ENCODE measurements at regions of chr5 and their contacts with region 1.

Region 1: GRCh38 chr5:140840978-140841959 is at the start of gene PCDHA8:
- DNase-seq: peak; percentile 83
- H3K4me3 ChIP-seq: peak within 1 kb of the TSS; percentile 66 to 96
- H3K27ac ChIP-seq: peak within 1 kb of the TSS in 1 of 2 experiments; percentile 50; a peak in 1 of 4 replicates
- H3K4me1 ChIP-seq: no peaks in the 10 kb centered on the region
- H3K27me3 ChIP-seq: no peaks in the 10 kb centered on the region
- CTCF ChIP-seq: peak; percentile 87
- EP300 ChIP-seq: no peak
- RAD21 ChIP-seq: peak; percentile 92
- polyA plus RNA-seq, gene PCDHA8: 0.54 and 0.63 TPM in 2 replicates

Region 2: GRCh38 chr5:140806834-140807775 is 34.2 kb before region 1 on chr5 and contains the start of gene PCDHA4:
- CTCF ChIA-PET with region 1: interaction called, 52 read pairs
- POLR2A ChIA-PET with region 1: no interaction called
- DNase-seq: peak; percentile 65
- H3K4me3 ChIP-seq: peak within 1 kb of the TSS; percentile 63
- H3K27ac ChIP-seq: peak within 1 kb of the TSS in 1 of 2 experiments; percentile 77; a peak in 2 of 4 replicates
- H3K4me1 ChIP-seq: no peaks in the 10 kb centered on the region; a peak in 2 of 4 replicates
- H3K27me3 ChIP-seq: no peaks in the 10 kb centered on the region
- CTCF ChIP-seq: peak; percentile 63
- EP300 ChIP-seq: no peak
- RAD21 ChIP-seq: peak; percentile 69
- polyA plus RNA-seq, gene PCDHA4: 1.2 and 1.4 TPM in 2 replicates

Region 3: GRCh38 chr5:140862441-140863295 is 21.4 kb after region 1 on chr5:
- CTCF ChIA-PET with region 1: interaction called, 132 read pairs
- POLR2A ChIA-PET with region 1: interaction called, 5 read pairs
- DNase-seq: no peak
- H3K4me3 ChIP-seq: no peak overlapping the region; a peak in 1 of 4 replicates
- H3K27ac ChIP-seq: no peak overlapping the region
- H3K4me1 ChIP-seq: no peaks in the 10 kb centered on the region
- H3K27me3 ChIP-seq: no peaks in the 10 kb centered on the region
- CTCF ChIP-seq: no peak
- EP300 ChIP-seq: no peak
- RAD21 ChIP-seq: no peak

Region 4: DNA sequence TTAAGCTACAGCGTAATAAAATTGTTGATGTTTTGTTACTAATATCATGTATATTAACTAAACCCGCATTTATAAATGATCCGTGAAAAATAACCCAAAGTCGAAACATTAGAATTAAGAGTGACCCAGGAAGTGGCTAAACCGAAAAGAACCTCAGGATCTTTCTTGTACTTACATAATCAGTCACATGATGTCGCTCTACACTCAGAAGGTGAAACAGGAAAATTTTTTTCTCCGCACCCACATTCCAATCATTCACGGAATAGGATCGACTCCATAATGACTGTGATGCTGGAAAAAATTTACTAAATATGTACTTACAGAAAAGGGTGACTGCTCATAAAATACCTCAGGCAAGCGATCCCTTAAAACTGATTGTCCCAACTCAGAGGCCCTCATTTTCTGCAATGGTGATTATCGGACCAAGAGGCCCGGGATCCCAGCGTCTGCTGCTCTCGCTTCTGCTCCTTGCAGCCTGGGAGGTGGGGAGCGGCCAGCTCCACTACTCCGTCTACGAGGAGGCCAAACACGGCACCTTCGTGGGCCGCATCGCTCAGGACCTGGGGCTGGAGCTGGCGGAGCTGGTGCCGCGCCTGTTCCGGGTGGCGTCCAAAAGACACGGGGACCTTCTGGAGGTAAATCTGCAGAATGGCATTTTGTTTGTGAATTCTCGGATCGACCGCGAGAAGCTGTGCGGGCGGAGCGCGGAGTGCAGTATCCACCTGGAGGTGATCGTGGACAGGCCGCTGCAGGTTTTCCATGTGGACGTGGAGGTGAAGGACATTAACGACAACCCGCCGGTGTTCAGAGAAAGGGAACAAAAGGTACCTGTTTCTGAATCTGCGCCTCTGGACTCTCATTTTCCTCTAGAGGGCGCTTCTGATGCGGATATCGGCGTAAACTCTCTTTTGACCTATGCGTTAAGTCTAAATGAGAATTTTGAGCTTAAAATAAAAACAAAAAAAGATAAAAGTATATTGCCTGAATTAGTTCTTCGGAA is 34.1 kb after region 1 on chr5 and contains the start of gene PCDHA12:
- CTCF ChIA-PET with region 1: interaction called, 70 read pairs
- POLR2A ChIA-PET with region 1: no interaction called
- DNase-seq: peak; percentile 70
- H3K4me3 ChIP-seq: peak within 1 kb of the TSS; percentile 56 to 64
- H3K27ac ChIP-seq: peak within 1 kb of the TSS in 1 of 2 experiments; percentile 50; a peak in 2 of 4 replicates
- H3K4me1 ChIP-seq: no peaks in the 10 kb centered on the region; a peak in 2 of 4 replicates
- H3K27me3 ChIP-seq: no peaks in the 10 kb centered on the region
- CTCF ChIP-seq: peak; percentile 62
- EP300 ChIP-seq: no peak
- RAD21 ChIP-seq: peak; percentile 84
- polyA plus RNA-seq, gene PCDHA12: 0.54 and 0.70 TPM in 2 replicates

Region 5: GRCh38 chr5:140916349-140916748 is 75.1 kb after region 1 on chr5:
- CTCF ChIA-PET with region 1: interaction called, 14 read pairs
- POLR2A ChIA-PET with region 1: no interaction called
- DNase-seq: no peak
- H3K4me3 ChIP-seq: no peak overlapping the region
- H3K27ac ChIP-seq: no peak overlapping the region
- H3K4me1 ChIP-seq: no peaks in the 10 kb centered on the region
- H3K27me3 ChIP-seq: no peaks in the 10 kb centered on the region
- CTCF ChIP-seq: no peak
- EP300 ChIP-seq: no peak
- RAD21 ChIP-seq: no peak

Region 6: DNA sequence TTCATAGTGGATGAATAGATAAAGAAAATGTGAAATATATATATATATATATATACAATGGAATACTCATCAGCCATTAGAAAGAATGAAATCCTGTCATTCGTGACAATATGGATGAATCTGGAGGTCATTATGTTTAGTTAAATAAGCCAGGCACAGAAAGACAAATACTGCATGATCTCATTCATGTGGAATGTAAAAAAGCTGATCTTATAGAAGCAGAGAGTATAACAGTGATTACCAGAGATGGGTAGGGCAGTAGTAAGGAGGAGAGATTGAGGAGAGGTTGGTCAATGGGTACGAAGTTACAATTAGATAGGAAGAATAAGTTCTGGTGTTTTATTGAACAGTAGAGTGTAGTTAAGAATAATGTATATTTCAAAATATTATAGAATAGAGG is 105.3 kb after region 1 on chr5:
- CTCF ChIA-PET with region 1: no interaction called
- POLR2A ChIA-PET with region 1: no interaction called
- DNase-seq: no peak
- H3K4me3 ChIP-seq: no peak overlapping the region
- H3K27ac ChIP-seq: no peak overlapping the region
- H3K4me1 ChIP-seq: no peaks in the 10 kb centered on the region
- H3K27me3 ChIP-seq: no peaks in the 10 kb centered on the region
- CTCF ChIP-seq: no peak
- EP300 ChIP-seq: no peak
- RAD21 ChIP-seq: no peak

Region 7: DNA sequence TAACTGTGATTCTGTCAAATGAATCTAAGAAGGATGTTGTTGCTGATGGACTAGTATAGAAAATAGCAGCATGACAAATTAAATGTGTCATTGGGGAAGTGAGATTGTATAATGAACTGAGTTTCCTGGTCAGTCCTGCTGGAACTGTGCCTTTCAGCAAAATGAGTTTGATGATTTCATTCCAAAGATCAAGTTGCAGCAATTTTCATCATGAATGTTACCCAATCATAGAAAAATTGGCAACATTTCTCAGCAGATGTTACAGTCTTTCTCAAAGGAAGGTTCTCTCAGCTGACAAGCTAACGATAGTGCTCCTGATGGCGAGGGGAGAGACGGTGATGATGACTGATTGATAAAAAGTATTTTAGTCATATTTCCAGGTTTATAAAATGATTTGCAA is 135.7 kb after region 1 on chr5:
- CTCF ChIA-PET with region 1: interaction called, 28 read pairs
- POLR2A ChIA-PET with region 1: no interaction called
- DNase-seq: no peak
- H3K4me3 ChIP-seq: no peak overlapping the region
- H3K27ac ChIP-seq: peak overlapping the region in 1 of 2 experiments; percentile 98; a peak in 2 of 4 replicates
- H3K4me1 ChIP-seq: peaks cover 9 to 33% of the 10 kb centered on the region in 2 experiments; a peak in 3 of 4 replicates
- H3K27me3 ChIP-seq: no peaks in the 10 kb centered on the region
- CTCF ChIP-seq: no peak
- EP300 ChIP-seq: peak in 1 of 2 experiments; percentile 28; a peak in 1 of 4 replicates
- RAD21 ChIP-seq: no peak

Region 8: GRCh38 chr5:141050622-141051525 is 209.6 kb after region 1 on chr5 and contains the start of gene PCDHB1:
- CTCF ChIA-PET with region 1: interaction called, 103 read pairs
- POLR2A ChIA-PET with region 1: interaction called, 3 read pairs
- DNase-seq: peak; percentile 12
- H3K4me3 ChIP-seq: peak within 1 kb of the TSS; percentile 47 to 60
- H3K27ac ChIP-seq: no peak within 1 kb of the TSS
- H3K4me1 ChIP-seq: peaks cover 0 to 8% of the 10 kb centered on the region in 2 experiments; a peak in 1 of 4 replicates
- H3K27me3 ChIP-seq: no peaks in the 10 kb centered on the region
- CTCF ChIP-seq: no peak
- EP300 ChIP-seq: no peak
- RAD21 ChIP-seq: no peak
- polyA plus RNA-seq, gene PCDHB1: not detected in 2 replicates